GM10248 (cell line): ENCODE measurements at regions of chr7 and their contacts with region 1.

Region 1: DNA sequence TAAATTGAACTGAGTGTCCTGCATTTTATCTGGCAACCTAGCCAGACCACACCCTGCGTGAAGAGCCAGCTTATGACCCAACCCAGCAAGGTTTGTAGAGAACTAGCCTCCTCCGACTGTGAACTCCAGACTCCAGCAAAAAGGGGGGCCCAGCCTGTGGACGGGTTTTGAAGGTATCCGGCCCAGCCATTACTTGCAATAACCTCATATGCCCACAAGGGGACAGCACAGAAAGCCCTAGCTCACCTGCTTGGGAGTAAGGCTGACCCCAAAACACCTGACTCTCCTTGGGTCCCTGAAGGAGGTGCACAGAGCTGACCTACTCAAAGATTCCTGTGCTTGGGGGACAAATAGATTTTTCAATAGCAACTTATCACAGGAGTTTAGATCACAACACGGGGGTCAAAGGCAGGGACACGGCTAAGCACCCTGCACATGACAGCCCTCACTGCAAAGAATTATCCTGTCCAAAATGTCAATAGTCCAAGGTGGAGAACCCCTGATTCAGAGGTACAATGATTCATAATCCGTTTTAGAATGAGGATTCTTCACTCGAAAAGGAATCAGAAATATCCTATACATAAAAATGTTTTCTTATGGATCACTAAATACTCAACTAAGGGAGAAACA is 4.6 kb downstream of the TRPV6 start:
- DNase-seq: peak; percentile 72
- CTCF ChIP-seq: peak; percentile 73

Region 2: GRCh38 chr7:142438235-142438922 is 442.6 kb before region 1 on chr7:
- CTCF ChIA-PET with region 1: no interaction called
- POLR2A ChIA-PET with region 1: no interaction called
- DNase-seq: peak; percentile 43
- CTCF ChIP-seq: peak; percentile 58

Region 3: DNA sequence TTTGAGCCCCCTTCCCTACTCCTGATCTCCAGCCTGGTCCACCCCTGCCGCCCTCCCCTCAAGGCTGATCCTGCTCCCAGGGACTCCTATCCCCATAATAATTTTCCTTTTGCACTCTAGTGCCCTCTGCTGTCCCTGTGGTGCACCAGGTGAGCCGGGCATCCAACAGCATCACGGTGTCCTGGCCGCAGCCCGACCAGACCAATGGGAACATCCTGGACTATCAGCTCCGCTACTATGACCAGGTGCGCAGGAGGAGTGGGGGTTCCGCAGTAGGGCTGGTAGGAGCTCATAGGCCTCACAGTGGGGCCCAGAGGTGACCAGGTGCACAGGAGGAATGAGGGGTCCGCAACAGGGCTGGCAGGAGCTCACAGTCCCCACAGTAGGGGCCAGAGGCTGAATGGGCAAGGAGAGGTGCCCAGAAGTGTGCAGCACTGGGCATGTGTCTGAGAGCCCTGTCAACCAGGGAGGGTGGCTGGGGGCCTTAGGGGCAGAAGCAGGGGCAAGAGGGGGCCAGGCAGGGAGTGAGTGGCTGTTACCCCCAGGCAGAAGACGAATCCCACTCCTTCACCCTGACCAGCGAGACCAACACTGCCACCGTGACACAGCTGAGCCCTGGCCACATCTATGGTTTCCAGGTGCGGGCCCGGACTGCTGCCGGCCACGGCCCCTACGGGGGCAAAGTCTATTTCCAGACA is 14.5 kb before region 1 on chr7:
- CTCF ChIA-PET with region 1: interaction called, 39 read pairs
- POLR2A ChIA-PET with region 1: no interaction called
- DNase-seq: no peak
- CTCF ChIP-seq: peak; percentile 70

Region 4: DNA sequence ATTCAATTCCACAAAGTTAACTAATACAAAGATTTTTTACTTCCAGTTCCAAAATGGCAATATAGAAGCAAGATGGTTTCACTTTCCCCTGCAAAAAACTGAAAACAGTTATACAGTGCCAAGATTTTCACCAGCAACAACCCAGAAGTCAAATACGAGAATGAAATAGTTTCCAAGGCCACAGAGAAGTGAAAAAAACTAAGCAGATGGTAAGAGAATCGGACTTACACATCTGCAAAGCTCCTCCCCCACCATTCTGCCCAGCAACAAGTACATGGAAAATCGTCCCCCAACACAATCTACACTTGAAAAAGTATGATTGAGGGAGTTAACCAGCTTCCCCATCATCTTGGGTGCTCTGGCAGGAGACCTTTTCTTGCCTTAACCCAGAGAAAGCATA is 111.5 kb after region 1 on chr7:
- CTCF ChIA-PET with region 1: no interaction called
- POLR2A ChIA-PET with region 1: no interaction called
- DNase-seq: no peak
- CTCF ChIP-seq: no peak